Activated CD8-positive, alpha-beta T cell treated with anti-CD3 and anti-CD28 coated beads for 36 hours (primary cell): ENCODE measurements at regions of chr5 and their contacts with region 1.

Region 1: DNA sequence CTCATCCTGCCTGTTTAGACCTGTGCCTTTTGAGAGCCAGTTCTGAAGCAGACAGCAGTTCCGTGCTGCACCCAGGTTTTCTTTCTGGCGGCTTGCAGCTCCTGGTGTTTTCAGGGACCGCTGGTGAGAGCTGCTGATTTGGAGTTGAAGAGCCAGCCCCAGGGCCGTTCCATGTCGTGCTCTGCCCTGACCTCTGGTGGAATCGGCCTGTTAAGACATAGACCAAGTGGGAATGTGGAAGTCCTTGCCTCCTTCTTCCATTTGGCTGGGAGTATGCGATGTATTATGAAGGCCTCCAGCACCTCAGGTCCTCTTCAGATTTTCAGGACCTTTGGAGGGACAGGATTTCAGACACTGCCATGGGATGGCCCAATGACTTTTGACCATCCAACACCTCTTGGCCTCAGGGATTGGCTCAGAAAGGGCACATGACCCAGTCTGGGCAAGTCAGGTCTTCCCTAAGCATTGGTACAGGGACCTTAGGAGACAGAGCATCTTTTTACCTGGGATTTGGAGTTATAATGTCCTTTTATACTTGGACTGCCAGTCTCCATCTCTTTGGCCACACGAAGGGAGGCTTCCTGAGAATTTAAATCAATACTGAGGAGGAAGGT is 136.1 kb upstream of the CLINT1 start:
- DNase-seq: peak; percentile 58
- ATAC-seq: peak; percentile 91
- H3K4me3 Mint-ChIP-seq: no peak overlapping the region
- H3K27ac Mint-ChIP-seq: no peak overlapping the region
- H3K4me1 Mint-ChIP-seq: peaks cover 12% of the 10 kb centered on the region
- H3K27me3 Mint-ChIP-seq: peaks cover 19% of the 10 kb centered on the region
- CTCF ChIP-seq: peak; percentile 65

Region 2: DNA sequence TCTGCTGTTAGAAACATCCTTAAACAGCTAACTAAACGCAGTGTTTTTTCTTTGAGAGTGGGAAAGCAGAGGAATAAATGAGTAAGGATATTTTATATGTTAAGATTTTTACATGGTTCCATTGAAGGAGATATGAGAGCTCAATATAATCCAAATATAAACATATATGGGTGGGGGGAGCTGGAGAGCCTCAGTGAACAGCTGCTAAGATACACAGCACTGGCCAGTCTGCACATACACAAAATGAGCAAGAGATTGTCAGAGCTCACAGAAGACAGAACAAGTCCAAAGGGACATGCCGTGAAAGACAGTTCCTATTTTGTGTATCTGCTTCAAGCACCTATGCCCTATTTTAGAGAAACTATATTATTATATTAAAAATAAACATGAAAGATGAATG is 182.9 kb before region 1 on chr5:
- CTCF ChIA-PET with region 1: interaction called, 20 read pairs
- POLR2A ChIA-PET with region 1: no interaction called
- intact Hi-C with region 1: loop called (anchors 5 kb)
- DNase-seq: no peak
- ATAC-seq: no peak
- H3K4me3 Mint-ChIP-seq: no peak overlapping the region
- H3K27ac Mint-ChIP-seq: no peak overlapping the region
- H3K4me1 Mint-ChIP-seq: peaks cover under 1% of the 10 kb centered on the region
- H3K27me3 Mint-ChIP-seq: no peaks in the 10 kb centered on the region
- CTCF ChIP-seq: no peak

Region 3: GRCh38 chr5:158033076-158033475 is 38.1 kb after region 1 on chr5:
- CTCF ChIA-PET with region 1: no interaction called
- POLR2A ChIA-PET with region 1: no interaction called
- intact Hi-C with region 1: no loop called
- DNase-seq: no peak
- ATAC-seq: no peak
- H3K4me3 Mint-ChIP-seq: no peak overlapping the region
- H3K27ac Mint-ChIP-seq: no peak overlapping the region
- H3K4me1 Mint-ChIP-seq: peaks cover 9% of the 10 kb centered on the region
- H3K27me3 Mint-ChIP-seq: peaks cover 15% of the 10 kb centered on the region
- CTCF ChIP-seq: no peak

Region 4: GRCh38 chr5:158050421-158050820 is 55.4 kb after region 1 on chr5:
- CTCF ChIA-PET with region 1: no interaction called
- POLR2A ChIA-PET with region 1: no interaction called
- intact Hi-C with region 1: no loop called
- DNase-seq: no peak
- ATAC-seq: no peak
- H3K4me3 Mint-ChIP-seq: no peak overlapping the region
- H3K27ac Mint-ChIP-seq: no peak overlapping the region
- H3K4me1 Mint-ChIP-seq: no peaks in the 10 kb centered on the region
- H3K27me3 Mint-ChIP-seq: peaks cover 13% of the 10 kb centered on the region
- CTCF ChIP-seq: no peak